ENCODE measurements at regions of chr5 and their contacts with region 1.

Region 1: DNA sequence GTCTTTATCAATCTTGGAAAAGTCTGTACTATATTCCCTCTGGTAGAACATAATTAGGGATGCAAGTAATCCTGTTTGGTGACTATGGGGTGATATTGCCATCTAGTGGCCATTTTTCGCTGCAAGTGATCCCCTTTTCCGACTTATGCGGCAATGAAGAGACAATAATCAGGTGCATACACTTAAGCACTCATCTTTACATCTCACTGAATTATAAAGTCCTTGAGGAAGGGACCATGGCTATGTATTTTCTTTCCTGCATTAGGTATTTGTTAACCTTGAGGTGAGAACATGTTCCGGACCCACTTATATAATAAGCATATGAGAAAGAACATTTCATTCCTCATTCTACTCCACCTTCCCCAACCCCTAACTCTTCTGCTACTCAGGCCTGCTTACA is 19.6 kb upstream of the LIX1 start:
- DNase-seq: peak; percentile 72
- ATAC-seq: peak; percentile 60
- H3K4me3 Mint-ChIP-seq: no peak overlapping the region
- H3K27ac Mint-ChIP-seq: no peak overlapping the region
- H3K4me1 Mint-ChIP-seq: peaks cover 8% of the 10 kb centered on the region
- H3K27me3 Mint-ChIP-seq: no peaks in the 10 kb centered on the region

Region 2: GRCh38 chr5:96614110-96614691 is 547.8 kb before region 1 on chr5:
- CTCF ChIA-PET with region 1: interaction called, 25 read pairs
- POLR2A ChIA-PET with region 1: no interaction called
- DNase-seq: peak; percentile 65
- ATAC-seq: peak; percentile 39
- H3K4me3 Mint-ChIP-seq: no peak overlapping the region
- H3K27ac Mint-ChIP-seq: no peak overlapping the region
- H3K4me1 Mint-ChIP-seq: peaks cover 5% of the 10 kb centered on the region
- H3K27me3 Mint-ChIP-seq: peaks cover 37% of the 10 kb centered on the region

Region 3: DNA sequence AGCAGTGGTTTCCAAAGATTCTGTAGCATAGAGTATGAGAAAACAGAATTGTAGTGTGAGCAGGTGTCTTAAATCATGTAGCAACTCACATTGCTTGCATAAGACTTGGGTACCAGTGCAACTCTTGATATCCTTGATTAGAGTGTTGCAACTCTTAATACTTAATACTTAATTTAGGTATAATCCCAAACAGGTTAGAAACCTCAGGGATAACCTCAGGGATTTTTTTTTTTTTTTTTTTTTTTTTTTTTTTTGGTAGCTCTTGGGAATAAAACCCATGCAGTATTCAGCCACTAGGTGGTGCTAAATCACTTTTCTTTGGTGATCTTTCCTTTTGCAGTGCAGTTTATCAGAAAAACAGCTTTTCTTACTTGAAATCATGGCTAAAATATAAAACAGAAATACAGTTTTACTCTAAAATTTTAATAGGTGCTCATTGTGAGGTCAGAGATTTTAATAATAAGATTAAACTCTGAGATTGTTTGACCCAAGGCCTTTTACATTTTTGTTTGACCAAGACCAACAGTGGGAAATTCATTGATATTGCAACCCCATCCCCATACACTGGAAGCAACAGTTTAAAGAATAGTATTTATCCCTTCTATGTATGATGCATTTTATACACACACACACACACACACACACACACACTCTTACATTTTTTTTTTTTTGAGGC is 409.6 kb before region 1 on chr5:
- CTCF ChIA-PET with region 1: interaction called, 53 read pairs
- POLR2A ChIA-PET with region 1: no interaction called
- DNase-seq: peak; percentile 67
- ATAC-seq: no peak
- H3K4me3 Mint-ChIP-seq: no peak overlapping the region
- H3K27ac Mint-ChIP-seq: no peak overlapping the region
- H3K4me1 Mint-ChIP-seq: no peaks in the 10 kb centered on the region
- H3K27me3 Mint-ChIP-seq: no peaks in the 10 kb centered on the region

Region 4: DNA sequence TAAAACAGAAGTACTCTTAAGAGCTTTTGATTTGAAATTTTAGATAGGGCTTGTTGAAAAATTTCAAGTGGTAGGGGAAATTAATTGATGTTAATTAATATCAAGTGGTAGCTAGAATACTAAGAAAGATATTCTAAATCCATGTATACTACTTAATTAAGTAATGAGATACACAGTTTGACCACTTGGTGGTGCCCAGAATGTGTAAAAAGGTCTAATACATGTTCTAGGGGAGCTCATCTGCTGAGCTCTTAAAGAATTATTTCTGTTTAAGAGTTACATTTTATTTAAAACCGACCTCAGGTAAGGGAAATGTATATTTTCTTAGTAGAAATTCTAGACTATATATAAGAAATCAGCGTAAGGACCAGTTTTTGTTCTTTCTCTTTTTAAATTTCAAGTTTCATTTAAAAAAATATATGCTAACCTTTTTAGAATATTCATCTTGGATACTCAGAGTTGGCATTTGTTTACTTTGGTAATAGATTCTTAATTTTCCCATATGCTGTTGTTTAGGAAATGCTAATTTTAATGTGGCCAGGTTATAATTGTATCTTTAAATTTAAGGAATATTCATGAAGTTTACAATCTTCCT is 164.7 kb before region 1 on chr5:
- CTCF ChIA-PET with region 1: interaction called, 36 read pairs
- POLR2A ChIA-PET with region 1: no interaction called
- DNase-seq: peak; percentile 51
- ATAC-seq: peak; percentile 54
- H3K4me3 Mint-ChIP-seq: no peak overlapping the region
- H3K27ac Mint-ChIP-seq: no peak overlapping the region
- H3K4me1 Mint-ChIP-seq: peaks cover 43% of the 10 kb centered on the region
- H3K27me3 Mint-ChIP-seq: no peaks in the 10 kb centered on the region

Region 5: GRCh38 chr5:97062046-97062445 is 100.0 kb before region 1 on chr5:
- CTCF ChIA-PET with region 1: interaction called, 12 read pairs
- POLR2A ChIA-PET with region 1: no interaction called
- DNase-seq: no peak
- ATAC-seq: no peak
- H3K4me3 Mint-ChIP-seq: no peak overlapping the region
- H3K27ac Mint-ChIP-seq: no peak overlapping the region
- H3K4me1 Mint-ChIP-seq: peaks cover 4% of the 10 kb centered on the region
- H3K27me3 Mint-ChIP-seq: peaks cover 6% of the 10 kb centered on the region

Region 6: DNA sequence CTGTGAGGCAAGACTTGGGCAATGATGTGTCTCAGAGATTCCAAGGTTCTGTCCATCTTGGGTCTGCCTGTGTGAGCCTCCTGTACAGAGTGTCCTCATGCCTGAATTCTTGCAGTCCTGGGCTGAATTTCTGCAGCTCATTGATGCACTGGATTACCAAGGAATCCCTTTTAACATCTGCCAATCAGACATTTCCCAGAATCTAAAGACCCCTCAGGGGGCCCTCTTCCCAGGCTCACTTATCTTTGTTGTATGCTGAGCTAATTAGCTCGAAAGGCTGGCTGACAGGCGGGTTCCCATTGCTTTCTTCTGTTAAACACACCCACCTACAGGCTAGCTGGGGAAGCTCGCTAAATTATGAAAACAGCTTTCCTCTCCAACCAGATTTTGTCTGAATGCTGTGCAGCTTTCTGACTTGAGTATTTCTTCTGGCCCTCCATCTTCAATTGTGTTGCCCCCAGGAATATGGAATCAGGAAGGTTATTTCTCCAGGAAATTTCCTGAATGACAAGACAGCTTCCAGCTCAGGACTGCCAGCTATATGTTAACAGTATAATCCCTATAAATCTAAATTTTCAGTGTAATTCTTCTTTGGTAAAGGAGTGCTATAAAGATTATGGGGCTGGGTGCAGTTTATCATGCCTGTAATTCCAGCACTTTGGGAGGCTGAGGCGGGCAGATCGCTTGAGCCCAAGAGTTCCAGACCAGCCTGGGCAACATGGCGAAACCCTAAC is 19.4 kb before region 1 on chr5 and contains the start of gene LIX1:
- CTCF ChIA-PET with region 1: interaction called, 79 read pairs
- POLR2A ChIA-PET with region 1: no interaction called
- DNase-seq: peak; percentile 59
- ATAC-seq: peak; percentile 78
- H3K4me3 Mint-ChIP-seq: no peak within 1 kb of the TSS
- H3K27ac Mint-ChIP-seq: no peak within 1 kb of the TSS
- H3K4me1 Mint-ChIP-seq: no peaks in the 10 kb centered on the region
- H3K27me3 Mint-ChIP-seq: peaks cover 13% of the 10 kb centered on the region
- total RNA-seq, gene LIX1: not detected

Region 7: GRCh38 chr5:97172227-97172626 is 10.2 kb after region 1 on chr5:
- CTCF ChIA-PET with region 1: interaction called, 15 read pairs
- POLR2A ChIA-PET with region 1: no interaction called
- DNase-seq: no peak
- ATAC-seq: no peak
- H3K4me3 Mint-ChIP-seq: no peak overlapping the region
- H3K27ac Mint-ChIP-seq: no peak overlapping the region
- H3K4me1 Mint-ChIP-seq: peaks cover 5% of the 10 kb centered on the region
- H3K27me3 Mint-ChIP-seq: no peaks in the 10 kb centered on the region